HEK293T (cell line): ENCODE measurements at regions of chr17 and their contacts with region 1.

Region 1: DNA sequence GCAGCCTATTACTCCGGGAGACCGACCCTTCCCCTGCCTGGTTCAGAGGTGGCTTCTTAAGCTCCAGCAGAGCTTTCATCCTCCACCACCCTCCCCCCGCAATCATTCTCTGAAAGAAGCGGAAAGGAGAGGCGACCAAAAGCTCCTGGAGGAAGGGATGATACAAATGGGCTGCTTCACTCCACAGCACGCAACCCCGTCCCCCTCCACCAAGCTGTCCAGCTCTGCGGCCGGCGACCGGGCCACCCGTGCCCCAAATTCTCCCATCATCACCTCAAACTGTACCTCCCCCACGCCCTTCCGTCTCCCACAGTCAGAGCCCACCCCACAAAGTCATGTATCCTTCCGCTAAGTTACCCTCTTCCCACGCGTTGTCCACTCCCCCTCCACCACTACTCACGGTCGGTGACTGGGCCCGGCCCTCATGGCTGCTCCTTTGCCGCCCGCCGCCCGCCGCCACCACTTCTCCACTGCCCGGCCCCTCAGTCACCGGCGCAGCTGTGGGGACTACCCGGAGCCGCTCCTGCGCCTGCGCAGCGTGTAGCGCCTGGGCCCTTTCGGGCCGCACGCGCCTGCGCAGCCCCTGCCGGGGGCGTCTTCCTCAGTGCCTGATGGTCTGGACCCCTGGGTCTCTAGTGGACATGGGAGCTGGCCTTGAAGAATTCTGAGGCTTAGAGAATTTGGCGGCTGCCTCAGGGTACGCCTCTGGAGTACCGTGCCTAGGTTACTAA is at the start of gene FAM222B:
- DNase-seq: peak; percentile 95

Region 2: GRCh38 chr17:28655160-28655840 is 187.1 kb before region 1 on chr17:
- CTCF ChIA-PET with region 1: no interaction called
- POLR2A ChIA-PET with region 1: no interaction called
- DNase-seq: no peak

Region 3: GRCh38 chr17:28763804-28764266 is 78.6 kb before region 1 on chr17:
- CTCF ChIA-PET with region 1: interaction called, 5 read pairs
- POLR2A ChIA-PET with region 1: interaction called, 21 read pairs
- DNase-seq: peak; percentile 40

Region 4: GRCh38 chr17:28812091-28812747 is 30.2 kb before region 1 on chr17:
- CTCF ChIA-PET with region 1: interaction called, 3 read pairs
- POLR2A ChIA-PET with region 1: interaction called, 10 read pairs
- DNase-seq: peak; percentile 92

Region 5: GRCh38 chr17:28854457-28855350 is 12.3 kb after region 1 on chr17 and contains the start of gene ERAL1:
- CTCF ChIA-PET with region 1: no interaction called
- POLR2A ChIA-PET with region 1: interaction called, 20 read pairs
- DNase-seq: peak; percentile 81

Region 6: GRCh38 chr17:28871056-28871579 is 28.7 kb after region 1 on chr17:
- CTCF ChIA-PET with region 1: no interaction called
- POLR2A ChIA-PET with region 1: no interaction called
- DNase-seq: no peak

Region 7: DNA sequence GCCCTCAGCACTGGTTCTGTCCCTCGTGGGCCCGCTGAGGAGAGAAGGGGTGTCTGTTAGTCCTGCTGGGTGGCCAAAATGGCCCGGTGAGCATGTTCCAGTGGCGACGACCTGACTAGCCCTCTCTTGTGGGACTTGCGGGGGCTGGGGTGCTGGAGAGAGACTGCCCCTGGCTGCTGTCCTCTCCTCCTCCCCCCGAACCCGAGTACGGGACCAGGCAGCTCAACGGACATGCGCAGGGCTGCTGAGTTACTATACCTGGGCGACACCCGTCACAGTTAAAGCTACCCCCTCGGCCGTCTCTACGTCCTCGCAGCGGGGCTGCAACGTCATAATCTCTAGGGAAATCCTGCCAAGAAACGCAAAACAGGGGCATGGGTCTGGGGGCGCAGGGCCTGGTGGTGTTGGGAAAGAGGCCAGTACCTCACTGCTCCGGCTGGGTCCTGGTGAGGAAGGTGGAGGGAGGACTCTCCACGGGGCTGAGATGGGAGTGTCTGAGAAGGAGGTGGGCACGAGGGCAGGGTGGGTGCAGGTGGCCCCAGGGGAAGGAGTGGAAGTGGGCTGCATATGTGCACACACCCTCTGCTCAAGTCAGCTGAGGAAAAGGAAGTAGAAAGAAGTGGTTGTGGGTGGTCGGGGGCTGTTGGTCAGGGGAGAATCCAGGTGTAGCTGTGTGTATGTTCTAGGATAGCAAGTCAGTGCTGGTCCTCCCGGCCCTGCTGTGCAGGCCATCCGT is 41.7 kb after region 1 on chr17:
- CTCF ChIA-PET with region 1: no interaction called
- POLR2A ChIA-PET with region 1: no interaction called
- DNase-seq: no peak

Region 8: DNA sequence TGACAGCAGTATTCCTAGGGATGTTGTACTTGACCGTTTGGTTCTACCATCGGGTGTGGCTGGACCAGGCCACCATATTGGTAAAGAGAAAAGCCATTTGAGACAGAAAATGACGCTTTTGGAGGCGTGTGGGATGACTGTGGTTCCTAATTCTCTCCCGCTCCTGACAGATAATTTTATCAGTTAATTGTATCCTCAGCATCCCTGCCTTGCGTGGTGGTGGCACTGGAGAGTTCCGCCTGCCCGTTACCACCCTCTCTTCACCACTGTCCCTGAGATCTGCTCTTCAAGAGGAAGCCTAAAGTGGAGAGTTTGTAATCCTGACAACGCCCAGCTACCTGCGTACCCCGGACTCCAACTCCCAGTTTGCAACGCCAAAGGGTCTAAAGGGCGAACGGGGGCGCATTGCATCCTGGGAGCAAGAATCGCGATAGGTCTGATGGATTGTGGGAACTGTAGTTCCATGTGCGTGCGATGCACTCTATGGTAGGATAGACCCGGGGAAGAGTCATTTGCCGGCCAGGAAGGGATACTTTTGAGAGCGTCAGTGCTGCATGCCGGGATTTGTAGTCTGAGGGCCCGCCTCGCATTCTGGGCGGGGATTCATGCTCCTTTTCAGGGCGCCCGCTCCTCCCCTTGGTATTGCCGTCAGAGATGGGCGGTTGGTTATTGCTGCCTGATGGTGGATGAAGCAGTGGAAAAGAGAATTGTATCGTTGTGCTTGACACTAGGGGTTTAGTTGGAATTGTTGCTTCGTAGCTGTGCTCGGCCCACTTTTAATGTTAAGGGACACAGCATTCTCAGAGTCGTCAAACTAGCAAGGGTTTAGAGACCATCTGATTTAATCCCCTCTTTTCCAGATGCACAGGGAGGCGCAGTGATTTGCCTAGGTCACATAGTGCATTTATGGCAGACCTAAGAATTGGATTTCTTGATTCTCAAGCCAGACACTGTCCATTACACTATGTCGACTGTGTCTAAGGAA is 109.8 kb after region 1 on chr17:
- CTCF ChIA-PET with region 1: interaction called, 4 read pairs
- POLR2A ChIA-PET with region 1: interaction called, 22 read pairs
- DNase-seq: peak; percentile 82